ENCODE measurements at regions of chr3 and their contacts with region 1.

Region 1: GRCh38 chr3:12663936-12664908 is at the start of gene RAF1:
- DNase-seq: peak; percentile 96 to 98 (median 98)
- ATAC-seq: peak; percentile 98
- H3K4me3 ChIP-seq: peak within 1 kb of the TSS; percentile 78
- H3K4me3 Mint-ChIP-seq: peak within 1 kb of the TSS; percentile 88 to 100 (median 98)
- H3K27ac ChIP-seq: peak within 1 kb of the TSS; percentile 95
- H3K27ac Mint-ChIP-seq: peak within 1 kb of the TSS; percentile 98 to 100 (median 99)
- H3K4me1 ChIP-seq: peaks cover 12 to 20% of the 10 kb centered on the region in 2 donors
- H3K4me1 Mint-ChIP-seq: peaks cover 19 to 44% (median 33%) of the 10 kb centered on the region in 7 donors
- H3K27me3 ChIP-seq: no peaks in the 10 kb centered on the region
- H3K27me3 Mint-ChIP-seq: no peaks in the 10 kb centered on the region
- total RNA-seq, gene RAF1: 93.4 to 129 (median 125) TPM

Region 2: GRCh38 chr3:11846281-11847034 is 817.8 kb before region 1 on chr3 and contains the start of gene TAMM41:
- CTCF ChIA-PET with region 1: no interaction called
- POLR2A ChIA-PET with region 1: interaction called, 3 read pairs
- intact Hi-C with region 1: loop called (anchors 2 to 5 kb)
- DNase-seq: peak; percentile 68 to 88 (median 85)
- ATAC-seq: peak; percentile 100
- H3K4me3 ChIP-seq: peak within 1 kb of the TSS; percentile 92
- H3K4me3 Mint-ChIP-seq: peak within 1 kb of the TSS; percentile 93 to 99 (median 98)
- H3K27ac ChIP-seq: peak within 1 kb of the TSS; percentile 90
- H3K27ac Mint-ChIP-seq: peak within 1 kb of the TSS; percentile 90 to 98 (median 96)
- H3K4me1 ChIP-seq: peaks cover 23 to 31% of the 10 kb centered on the region in 2 donors
- H3K4me1 Mint-ChIP-seq: peaks cover 21 to 62% (median 54%) of the 10 kb centered on the region in 7 donors
- H3K27me3 ChIP-seq: no peaks in the 10 kb centered on the region
- H3K27me3 Mint-ChIP-seq: peaks cover 0 to 12% (median 0%) of the 10 kb centered on the region in 5 donors
- total RNA-seq, gene TAMM41: 24.4 to 58.0 (median 28.6) TPM

Region 3: DNA sequence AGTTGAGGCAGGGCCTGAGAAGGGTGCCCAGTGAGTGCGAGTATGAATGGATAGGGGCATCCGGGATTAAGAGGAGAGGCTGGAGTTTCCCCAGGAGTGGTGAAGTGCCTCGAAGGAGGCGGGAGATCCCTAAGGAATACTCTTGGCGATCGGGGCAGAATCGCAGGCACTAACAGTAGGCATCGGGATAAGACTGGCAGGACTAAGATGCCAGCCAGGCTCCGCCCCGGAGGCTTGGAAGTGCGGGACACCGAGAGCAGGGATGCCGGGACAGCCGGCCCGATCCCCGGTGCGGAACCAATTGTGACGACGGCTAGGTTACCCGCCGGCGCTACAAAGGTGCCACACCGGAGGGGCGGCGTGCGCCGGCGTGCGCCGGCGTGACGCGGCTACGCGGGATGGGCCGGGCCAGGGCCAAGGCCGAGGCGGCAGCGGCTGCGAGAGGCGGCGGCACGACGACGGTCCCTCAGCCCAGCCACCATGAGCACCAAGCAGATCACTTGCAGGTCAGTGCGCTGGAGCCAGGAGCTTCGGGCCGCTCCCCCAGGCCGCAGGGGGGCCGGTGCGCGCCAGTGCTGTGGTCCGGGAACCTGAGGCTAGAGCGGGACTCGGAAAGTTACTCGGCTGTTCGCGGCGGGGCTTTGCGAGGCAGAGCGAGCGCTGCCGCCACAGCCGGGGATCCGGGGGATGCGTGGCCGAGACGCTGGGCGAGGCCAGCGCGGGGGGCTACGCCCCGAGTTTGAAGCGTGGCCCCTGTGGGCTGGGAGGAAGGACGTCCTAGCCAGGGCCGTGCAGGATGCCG is 107.3 kb before region 1 on chr3 and contains the start of gene MKRN2:
- CTCF ChIA-PET with region 1: no interaction called
- POLR2A ChIA-PET with region 1: interaction called, 17 read pairs
- intact Hi-C with region 1: loop called (anchors 1 kb)
- DNase-seq: peak; percentile 74 to 89 (median 83)
- ATAC-seq: peak; percentile 98
- H3K4me3 ChIP-seq: peak within 1 kb of the TSS; percentile 95
- H3K4me3 Mint-ChIP-seq: peak within 1 kb of the TSS; percentile 90 to 100 (median 96)
- H3K27ac ChIP-seq: peak within 1 kb of the TSS; percentile 94
- H3K27ac Mint-ChIP-seq: peak within 1 kb of the TSS; percentile 87 to 95 (median 93)
- H3K4me1 ChIP-seq: peaks cover 31 to 38% of the 10 kb centered on the region in 2 donors
- H3K4me1 Mint-ChIP-seq: peaks cover 40 to 71% (median 68%) of the 10 kb centered on the region in 7 donors
- H3K27me3 ChIP-seq: peaks cover 6% of the 10 kb centered on the region in 2 donors
- H3K27me3 Mint-ChIP-seq: peaks cover 22 to 37% (median 28%) of the 10 kb centered on the region in 5 donors
- total RNA-seq, gene MKRN2: 21.9 to 34.5 (median 25.4) TPM

Region 4: DNA sequence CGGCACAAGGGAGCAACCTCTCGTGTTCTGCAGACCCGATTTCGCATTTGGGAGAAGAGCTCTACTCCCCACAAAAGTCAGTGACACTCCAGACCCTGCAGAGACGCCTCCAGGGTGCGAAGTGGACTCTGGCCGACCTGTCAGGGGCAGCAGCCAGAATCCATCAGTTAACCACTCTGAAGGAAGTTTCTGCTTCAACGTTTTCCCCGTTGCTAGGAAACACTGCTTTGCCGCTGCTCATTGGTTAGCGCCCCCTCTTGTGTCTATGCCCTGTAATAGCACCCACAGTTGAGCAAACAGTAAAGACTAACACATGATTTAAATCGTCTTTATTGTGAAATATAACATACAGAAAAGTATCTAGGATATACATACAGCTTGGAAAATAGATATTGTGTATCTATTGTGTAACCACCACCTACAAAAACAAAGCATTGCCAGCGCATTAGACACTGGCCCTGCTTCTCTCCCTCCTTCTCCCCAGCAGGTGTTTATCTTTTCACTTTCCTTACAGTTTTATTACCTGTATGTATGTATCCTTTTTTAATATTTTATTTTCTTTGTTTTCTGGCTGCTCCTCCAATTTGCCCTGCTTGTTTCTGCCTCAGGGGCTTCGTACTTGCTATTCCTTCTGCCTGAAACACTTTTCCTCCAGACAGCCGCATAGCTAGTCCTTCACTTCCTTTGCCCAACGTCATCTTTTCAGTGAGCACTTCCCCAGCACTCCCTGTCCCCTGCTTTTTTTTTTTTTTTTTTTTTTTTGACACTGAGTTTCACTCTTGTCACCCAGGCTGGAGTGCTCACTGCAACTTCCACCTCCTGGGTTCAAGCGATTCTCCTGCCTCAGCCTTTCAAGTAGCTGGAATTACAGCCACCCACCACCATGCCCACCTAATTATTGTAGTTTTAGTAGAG is 56.0 kb after region 1 on chr3:
- CTCF ChIA-PET with region 1: no interaction called
- POLR2A ChIA-PET with region 1: no interaction called
- intact Hi-C with region 1: loop called (anchors 1 kb)
- DNase-seq: peak; percentile 37 to 85 (median 81)
- ATAC-seq: peak; percentile 98
- H3K4me3 ChIP-seq: peak overlapping the region; percentile 50
- H3K4me3 Mint-ChIP-seq: peak overlapping the region; percentile 30 to 79 (median 72)
- H3K27ac ChIP-seq: no peak overlapping the region
- H3K27ac Mint-ChIP-seq: peak overlapping the region; percentile 46 to 93 (median 74)
- H3K4me1 ChIP-seq: peaks cover 0 to 5% of the 10 kb centered on the region in 2 donors
- H3K4me1 Mint-ChIP-seq: peaks cover 6 to 12% (median 9%) of the 10 kb centered on the region in 7 donors
- H3K27me3 ChIP-seq: no peaks in the 10 kb centered on the region
- H3K27me3 Mint-ChIP-seq: no peaks in the 10 kb centered on the region

Region 5: GRCh38 chr3:12841149-12841970 is 177.1 kb after region 1 on chr3 and contains the start of gene RPL32:
- CTCF ChIA-PET with region 1: no interaction called
- POLR2A ChIA-PET with region 1: interaction called, 5 read pairs
- intact Hi-C with region 1: loop called (anchors 1 kb)
- DNase-seq: peak; percentile 72 to 94 (median 92)
- ATAC-seq: peak; percentile 95
- H3K4me3 ChIP-seq: peak within 1 kb of the TSS; percentile 90
- H3K4me3 Mint-ChIP-seq: peak within 1 kb of the TSS; percentile 92 to 97 (median 96)
- H3K27ac ChIP-seq: peak within 1 kb of the TSS; percentile 92
- H3K27ac Mint-ChIP-seq: peak within 1 kb of the TSS; percentile 98 to 100 (median 100)
- H3K4me1 ChIP-seq: peaks cover 16 to 28% of the 10 kb centered on the region in 2 donors
- H3K4me1 Mint-ChIP-seq: peaks cover 31 to 54% (median 47%) of the 10 kb centered on the region in 7 donors
- H3K27me3 ChIP-seq: no peaks in the 10 kb centered on the region
- H3K27me3 Mint-ChIP-seq: no peaks in the 10 kb centered on the region
- total RNA-seq, gene RPL32: 1,890 to 4,471 (median 4,246) TPM

Region 6: GRCh38 chr3:13479581-13480339 is 815.5 kb after region 1 on chr3 and contains the start of gene HDAC11:
- CTCF ChIA-PET with region 1: no interaction called
- POLR2A ChIA-PET with region 1: no interaction called
- intact Hi-C with region 1: loop called in 1 of 2 experiments (anchors 1 kb)
- DNase-seq: peak; percentile 93 to 98 (median 95)
- ATAC-seq: peak; percentile 98
- H3K4me3 ChIP-seq: peak within 1 kb of the TSS; percentile 97
- H3K4me3 Mint-ChIP-seq: peak within 1 kb of the TSS; percentile 90 to 97 (median 94)
- H3K27ac ChIP-seq: peak within 1 kb of the TSS; percentile 98
- H3K27ac Mint-ChIP-seq: peak within 1 kb of the TSS; percentile 82 to 97 (median 94)
- H3K4me1 ChIP-seq: peaks cover 8 to 15% of the 10 kb centered on the region in 2 donors
- H3K4me1 Mint-ChIP-seq: peaks cover 4 to 22% (median 15%) of the 10 kb centered on the region in 7 donors
- H3K27me3 ChIP-seq: no peaks in the 10 kb centered on the region
- H3K27me3 Mint-ChIP-seq: peaks cover 0 to 13% (median 0%) of the 10 kb centered on the region in 5 donors
- total RNA-seq, gene HDAC11: 1.2 to 8.0 (median 7.3) TPM

Region 7: DNA sequence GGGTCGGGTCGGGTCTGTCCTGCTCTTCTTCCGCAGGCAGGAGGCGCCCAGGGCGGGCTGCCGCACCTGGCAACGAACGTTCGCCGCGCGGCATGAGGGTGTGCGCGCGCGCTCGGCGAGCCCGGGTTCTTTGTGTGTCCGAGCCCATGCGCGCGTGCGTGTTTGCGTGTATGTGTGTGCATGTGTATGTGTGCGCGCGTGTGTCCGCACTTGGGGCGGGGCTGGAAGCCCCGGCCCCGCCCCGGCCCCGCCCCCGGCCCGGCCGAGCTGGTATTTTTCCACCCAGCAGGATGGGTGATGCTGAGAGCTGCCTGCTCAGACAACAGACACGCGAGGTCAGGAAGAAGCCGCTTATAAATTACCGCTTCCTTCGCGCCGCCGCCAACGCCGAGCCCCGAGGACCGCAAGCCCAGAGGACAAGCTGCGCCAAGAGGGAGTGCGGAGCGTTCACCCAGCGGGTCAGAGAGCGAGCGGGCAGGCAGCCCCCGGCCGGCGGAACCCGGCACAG is 1738.1 kb after region 1 on chr3 and contains the start of gene SLC6A6:
- CTCF ChIA-PET with region 1: no interaction called
- POLR2A ChIA-PET with region 1: no interaction called
- intact Hi-C with region 1: loop called in 1 of 2 experiments (anchors 10 kb)
- DNase-seq: peak; percentile 86 to 95 (median 92)
- ATAC-seq: peak; percentile 89
- H3K4me3 ChIP-seq: peak within 1 kb of the TSS; percentile 100
- H3K4me3 Mint-ChIP-seq: peak within 1 kb of the TSS; percentile 91 to 100 (median 98)
- H3K27ac ChIP-seq: peak within 1 kb of the TSS; percentile 83
- H3K27ac Mint-ChIP-seq: peak within 1 kb of the TSS; percentile 89 to 98 (median 96)
- H3K4me1 ChIP-seq: peaks cover 20 to 27% of the 10 kb centered on the region in 2 donors
- H3K4me1 Mint-ChIP-seq: peaks cover 33 to 50% (median 44%) of the 10 kb centered on the region in 7 donors
- H3K27me3 ChIP-seq: no peaks in the 10 kb centered on the region
- H3K27me3 Mint-ChIP-seq: peaks cover 0 to 1% (median 0%) of the 10 kb centered on the region in 5 donors
- total RNA-seq, gene SLC6A6: 34.5 to 87.5 (median 35.6) TPM